ENCODE measurements at regions of chr12 and their contacts with region 1.

Region 1: GRCh38 chr12:122974274-122974891 is 661 bp upstream of the OGFOD2 start:
- DNase-seq: peak; percentile 97 to 100 (median 99)
- ATAC-seq: peak; percentile 85
- H3K4me3 ChIP-seq: peak overlapping the region; percentile 91 to 93
- H3K4me3 Mint-ChIP-seq: peak overlapping the region; percentile 98
- H3K27ac ChIP-seq: peak overlapping the region; percentile 93 to 97
- H3K27ac Mint-ChIP-seq: peak overlapping the region; percentile 98
- H3K4me1 ChIP-seq: peaks cover 26% of the 10 kb centered on the region
- H3K4me1 Mint-ChIP-seq: peaks cover 31% of the 10 kb centered on the region
- H3K27me3 ChIP-seq: no peaks in the 10 kb centered on the region
- H3K27me3 Mint-ChIP-seq: no peaks in the 10 kb centered on the region
- CTCF ChIP-seq: no peak

Region 2: GRCh38 chr12:123601602-123602489 is 627.5 kb after region 1 on chr12 and contains the start of gene DDX55:
- CTCF ChIA-PET with region 1: no interaction called
- POLR2A ChIA-PET with region 1: interaction called, 5 read pairs
- intact Hi-C with region 1: loop called (anchors 1 to 2 kb)
- DNase-seq: peak; percentile 71 to 94 (median 87)
- ATAC-seq: peak; percentile 93
- H3K4me3 ChIP-seq: peak within 1 kb of the TSS; percentile 92 to 94
- H3K4me3 Mint-ChIP-seq: peak within 1 kb of the TSS; percentile 98
- H3K27ac ChIP-seq: peak within 1 kb of the TSS; percentile 78 to 89
- H3K27ac Mint-ChIP-seq: peak within 1 kb of the TSS; percentile 94
- H3K4me1 ChIP-seq: peaks cover 16% of the 10 kb centered on the region
- H3K4me1 Mint-ChIP-seq: peaks cover 31% of the 10 kb centered on the region
- H3K27me3 ChIP-seq: no peaks in the 10 kb centered on the region
- H3K27me3 Mint-ChIP-seq: no peaks in the 10 kb centered on the region
- CTCF ChIP-seq: peak; percentile 42
- total RNA-seq, gene DDX55: 41.1 to 44.5 TPM

Measured in CD8-positive, alpha-beta T cell (primary cell).